CD8-positive, alpha-beta memory T cell (primary cell): ENCODE measurements at regions of chr22 and their contacts with region 1.

Region 1: GRCh38 chr22:36252754-36253517 is at the start of gene APOL1:
- DNase-seq: peak in 4 of 5 donors; percentile 39 to 70 (median 62)
- H3K4me3 ChIP-seq: peak within 1 kb of the TSS; percentile 74
- H3K4me3 Mint-ChIP-seq: peak within 1 kb of the TSS; percentile 88 to 99 (median 96)
- H3K27ac ChIP-seq: peak within 1 kb of the TSS; percentile 58
- H3K27ac Mint-ChIP-seq: peak within 1 kb of the TSS; percentile 76 to 99 (median 97)
- H3K4me1 ChIP-seq: peaks cover 38% of the 10 kb centered on the region
- H3K4me1 Mint-ChIP-seq: peaks cover 44 to 53% (median 46%) of the 10 kb centered on the region in 3 donors
- H3K27me3 ChIP-seq: no peaks in the 10 kb centered on the region
- H3K27me3 Mint-ChIP-seq: no peaks in the 10 kb centered on the region
- total RNA-seq, gene APOL1: 32.8 to 34.3 TPM

Region 2: GRCh38 chr22:36227386-36227785 is 25.6 kb before region 1 on chr22:
- CTCF ChIA-PET with region 1: no interaction called
- POLR2A ChIA-PET with region 1: interaction called, 11 read pairs
- DNase-seq: no peak
- H3K4me3 ChIP-seq: no peak overlapping the region
- H3K4me3 Mint-ChIP-seq: no peak overlapping the region
- H3K27ac ChIP-seq: no peak overlapping the region
- H3K27ac Mint-ChIP-seq: peak overlapping the region in 1 of 8 donors; percentile 29
- H3K4me1 ChIP-seq: no peaks in the 10 kb centered on the region
- H3K4me1 Mint-ChIP-seq: peaks cover 4 to 6% (median 4%) of the 10 kb centered on the region in 3 donors
- H3K27me3 ChIP-seq: no peaks in the 10 kb centered on the region
- H3K27me3 Mint-ChIP-seq: no peaks in the 10 kb centered on the region

Region 3: GRCh38 chr22:36301384-36301828 is 48.5 kb after region 1 on chr22:
- CTCF ChIA-PET with region 1: no interaction called
- POLR2A ChIA-PET with region 1: no interaction called
- DNase-seq: peak; percentile 73 to 87 (median 78)
- H3K4me3 ChIP-seq: no peak overlapping the region
- H3K4me3 Mint-ChIP-seq: peak overlapping the region in 2 of 7 donors; percentile 43 to 85
- H3K27ac ChIP-seq: no peak overlapping the region
- H3K27ac Mint-ChIP-seq: peak overlapping the region; percentile 37 to 91 (median 79)
- H3K4me1 ChIP-seq: peaks cover 10% of the 10 kb centered on the region
- H3K4me1 Mint-ChIP-seq: peaks cover 11 to 16% (median 13%) of the 10 kb centered on the region in 3 donors
- H3K27me3 ChIP-seq: no peaks in the 10 kb centered on the region
- H3K27me3 Mint-ChIP-seq: peaks cover 0 to 3% of the 10 kb centered on the region in 2 donors

Region 4: GRCh38 chr22:36587289-36588154 is 334.6 kb after region 1 on chr22:
- CTCF ChIA-PET with region 1: no interaction called
- POLR2A ChIA-PET with region 1: no interaction called
- DNase-seq: no peak
- H3K4me3 ChIP-seq: no peak overlapping the region
- H3K4me3 Mint-ChIP-seq: no peak overlapping the region
- H3K27ac ChIP-seq: no peak overlapping the region
- H3K27ac Mint-ChIP-seq: no peak overlapping the region
- H3K4me1 ChIP-seq: no peaks in the 10 kb centered on the region
- H3K4me1 Mint-ChIP-seq: no peaks in the 10 kb centered on the region
- H3K27me3 ChIP-seq: no peaks in the 10 kb centered on the region
- H3K27me3 Mint-ChIP-seq: peaks cover 18 to 66% of the 10 kb centered on the region in 2 donors